Ascending aorta (tissue), 2 donors: ENCODE measurements at regions of chr5 and their contacts with region 1.

Region 1: GRCh38 chr5:122845229-122846050 is at the start of gene SNX24:
- DNase-seq: peak; percentile 55 to 90
- H3K4me3 ChIP-seq: peak within 1 kb of the TSS; percentile 77 to 96
- H3K27ac ChIP-seq: peak within 1 kb of the TSS; percentile 90 to 91
- H3K4me1 ChIP-seq: peaks cover 8 to 15% of the 10 kb centered on the region in 2 donors
- H3K27me3 ChIP-seq: no peaks in the 10 kb centered on the region
- CTCF ChIP-seq: no peak
- total RNA-seq, gene SNX24: 21.1 TPM

Region 2: DNA sequence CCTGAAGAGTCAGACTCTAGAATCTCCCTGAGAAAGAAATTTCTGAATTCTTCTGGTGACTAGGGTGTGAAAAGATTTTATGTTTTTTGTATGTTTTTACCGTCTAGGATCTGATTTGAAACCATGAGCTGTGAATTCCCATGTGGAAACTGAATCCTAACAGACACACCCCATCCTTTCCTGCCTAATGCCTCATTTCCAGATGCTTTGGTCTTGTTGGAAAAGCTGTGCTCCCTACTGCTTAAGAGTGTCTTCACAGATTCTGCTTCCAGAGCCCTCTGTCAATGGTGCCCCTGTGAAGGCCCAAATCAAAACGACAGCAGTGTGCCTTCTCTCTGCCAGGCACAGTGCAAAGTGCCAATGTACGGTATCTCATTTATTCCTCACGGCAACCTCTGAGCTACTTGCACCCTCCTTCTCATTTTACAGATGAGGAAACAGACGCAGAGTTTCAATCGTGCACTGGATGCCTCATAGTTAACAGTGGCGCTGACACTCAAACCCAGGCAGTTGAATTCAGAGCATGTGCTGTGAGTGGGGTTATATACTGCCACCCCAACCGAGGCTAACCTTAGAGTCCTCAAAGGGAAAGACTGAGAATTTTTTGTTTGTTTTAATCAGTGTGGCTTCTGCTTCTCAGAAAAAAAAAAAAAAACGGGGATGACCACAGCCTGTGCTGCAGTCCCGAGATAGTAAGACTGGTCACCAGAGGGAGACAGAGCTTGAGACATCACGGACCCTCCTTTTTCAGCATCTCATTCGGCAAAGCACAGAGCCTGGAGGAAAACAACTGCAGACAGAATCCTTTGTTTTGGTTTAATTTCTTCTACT is 345.0 kb before region 1 on chr5:
- intact Hi-C with region 1: loop called (anchors 5 kb)
- DNase-seq: no peak
- H3K4me3 ChIP-seq: peak overlapping the region in 1 of 2 donors; percentile 22
- H3K27ac ChIP-seq: peak overlapping the region; percentile 59 to 63
- H3K4me1 ChIP-seq: peaks cover 5 to 9% of the 10 kb centered on the region in 2 donors
- H3K27me3 ChIP-seq: no peaks in the 10 kb centered on the region
- CTCF ChIP-seq: peak in 2 of 3 experiments; percentile 28 to 43

Region 3: GRCh38 chr5:122907238-122907637 is 61.8 kb after region 1 on chr5:
- intact Hi-C with region 1: loop called (anchors 5 kb)
- DNase-seq: no peak
- H3K4me3 ChIP-seq: peak overlapping the region in 1 of 2 donors; percentile 24
- H3K27ac ChIP-seq: peak overlapping the region; percentile 41 to 68
- H3K4me1 ChIP-seq: peaks cover 0 to 16% of the 10 kb centered on the region in 2 donors
- H3K27me3 ChIP-seq: no peaks in the 10 kb centered on the region
- CTCF ChIP-seq: no peak

Region 4: DNA sequence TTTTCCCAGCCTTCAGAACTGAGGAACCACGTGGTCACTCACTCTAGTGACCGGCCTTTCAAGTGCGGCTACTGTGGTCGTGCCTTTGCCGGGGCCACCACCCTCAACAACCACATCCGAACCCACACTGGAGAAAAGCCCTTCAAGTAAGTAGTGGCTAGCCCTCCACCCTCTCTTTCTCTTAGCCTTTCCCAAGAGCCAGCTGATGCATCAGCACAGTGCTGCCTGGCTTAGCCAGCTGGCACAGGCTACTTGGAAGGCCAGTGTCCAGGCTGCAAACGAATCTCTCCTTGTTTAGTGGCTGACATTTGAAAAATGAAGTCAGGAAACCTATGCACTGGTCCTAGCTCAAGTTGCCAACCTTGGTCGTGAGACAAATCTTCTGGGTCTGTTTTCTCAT is 334.7 kb after region 1 on chr5:
- intact Hi-C with region 1: loop called (anchors 10 kb)
- DNase-seq: peak; percentile 37 to 89
- H3K4me3 ChIP-seq: no peak overlapping the region
- H3K27ac ChIP-seq: peak overlapping the region; percentile 81 to 91
- H3K4me1 ChIP-seq: peaks cover 6 to 60% of the 10 kb centered on the region in 2 donors
- H3K27me3 ChIP-seq: no peaks in the 10 kb centered on the region
- CTCF ChIP-seq: no peak

Region 5: DNA sequence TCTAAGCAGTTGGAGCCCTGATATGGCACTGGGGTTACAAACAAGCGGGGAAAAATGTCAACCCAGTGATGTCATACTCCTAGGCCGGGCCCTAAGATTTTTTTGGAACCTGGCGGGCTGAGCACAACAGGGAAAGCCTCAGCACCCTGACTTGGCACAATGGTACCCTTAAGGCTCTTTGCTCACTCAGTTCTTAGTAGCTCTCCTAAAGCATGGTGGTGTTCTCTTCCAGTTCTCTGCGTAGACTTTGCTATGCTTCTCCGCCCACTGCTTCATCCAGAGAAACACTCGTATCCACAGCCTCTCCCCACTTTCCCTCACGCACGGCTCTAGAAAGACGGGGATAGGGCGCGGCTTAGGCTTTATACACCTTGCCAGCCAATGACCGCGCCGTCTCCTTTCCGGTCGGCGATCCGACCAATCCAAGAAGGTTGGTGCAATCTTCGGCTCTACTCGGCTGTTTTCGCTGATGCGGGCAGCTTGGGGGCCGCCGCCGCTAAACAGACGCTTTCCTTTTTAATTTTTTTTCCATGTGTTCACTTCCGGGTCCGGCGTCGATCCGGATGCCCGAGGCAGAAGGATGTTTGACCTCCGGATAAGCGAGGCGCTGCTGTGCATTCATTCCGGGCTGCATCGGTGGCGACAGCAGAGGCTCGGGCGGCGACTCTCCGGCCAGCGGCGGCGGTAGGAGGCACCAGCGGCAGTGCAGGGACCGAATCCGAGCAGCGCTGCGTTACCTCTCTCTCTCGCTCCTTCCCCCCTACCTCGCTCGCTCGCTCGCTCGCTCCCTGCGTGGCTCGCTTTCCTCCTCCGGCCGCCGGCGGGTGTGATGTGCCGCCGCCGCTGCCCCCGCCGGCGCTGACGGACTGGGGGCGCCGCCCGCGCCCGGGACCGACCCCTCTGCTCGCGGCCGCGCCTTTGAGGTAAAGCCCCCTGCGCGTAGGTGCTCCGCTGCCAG is 666.5 kb after region 1 on chr5 and contains the start of gene CSNK1G3:
- intact Hi-C with region 1: loop called (anchors 5 kb)
- DNase-seq: peak; percentile 94 to 98
- H3K4me3 ChIP-seq: peak within 1 kb of the TSS; percentile 87 to 92
- H3K27ac ChIP-seq: peak within 1 kb of the TSS; percentile 90 to 97
- H3K4me1 ChIP-seq: peaks cover 0 to 10% of the 10 kb centered on the region in 2 donors
- H3K27me3 ChIP-seq: no peaks in the 10 kb centered on the region
- CTCF ChIP-seq: no peak
- total RNA-seq, gene CSNK1G3: 28.5 TPM